ENCODE measurements at regions of chr16 and their contacts with region 1.

Region 1: DNA sequence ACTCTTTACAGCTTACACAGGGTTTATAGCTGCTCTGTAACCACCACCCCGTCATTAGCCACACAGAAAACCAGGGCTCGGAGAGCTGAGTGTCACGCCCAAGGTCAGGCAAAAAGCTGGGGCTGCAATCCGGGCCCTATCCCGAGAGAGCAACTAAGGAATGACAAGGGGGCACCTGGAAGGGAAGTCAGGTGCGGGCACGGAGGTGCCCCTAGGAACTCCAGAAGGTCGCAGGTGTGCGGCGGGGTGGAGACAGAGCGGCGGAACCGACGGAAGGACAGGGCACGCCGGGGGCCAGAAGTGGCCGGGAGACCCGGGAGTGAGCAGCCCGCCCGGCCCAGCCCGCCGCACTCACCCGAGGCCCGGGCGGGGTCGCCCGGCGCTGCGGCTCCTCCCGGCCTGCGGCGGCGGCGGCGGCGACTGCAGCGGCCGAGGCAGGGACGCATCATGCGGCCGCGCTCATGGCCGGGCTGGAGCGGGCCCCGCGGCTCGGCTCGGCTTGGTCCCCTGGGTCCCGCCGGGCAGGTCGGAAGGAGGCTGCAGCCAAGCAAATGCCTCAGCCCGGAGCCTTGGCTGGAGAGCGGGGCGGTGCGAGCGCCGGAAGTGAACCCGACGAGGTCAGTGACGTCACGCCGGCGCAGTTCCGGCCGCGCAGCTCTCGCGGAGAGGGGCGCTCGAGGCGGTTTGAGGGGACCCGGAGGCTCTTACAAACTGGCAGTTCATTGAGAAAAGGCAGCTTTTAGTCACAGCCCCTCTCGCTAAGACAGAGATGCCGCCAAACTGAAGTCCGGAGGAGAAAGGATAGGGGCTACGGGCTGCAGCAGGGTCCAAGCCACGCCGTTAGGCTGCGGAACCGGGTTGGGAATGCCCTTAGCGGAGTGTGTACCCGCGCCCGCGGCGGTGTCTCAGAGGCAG is at the start of gene ZDHHC7:
- DNase-seq: peak; percentile 75
- H3K4me3 Mint-ChIP-seq: peak within 1 kb of the TSS; percentile 84
- H3K27ac Mint-ChIP-seq: peak within 1 kb of the TSS; percentile 99
- H3K4me1 Mint-ChIP-seq: peaks cover 15% of the 10 kb centered on the region
- H3K27me3 Mint-ChIP-seq: no peaks in the 10 kb centered on the region
- CTCF ChIP-seq: no peak
- total RNA-seq, gene ZDHHC7: 46.3 and 54.5 TPM in 2 replicates

Region 2: DNA sequence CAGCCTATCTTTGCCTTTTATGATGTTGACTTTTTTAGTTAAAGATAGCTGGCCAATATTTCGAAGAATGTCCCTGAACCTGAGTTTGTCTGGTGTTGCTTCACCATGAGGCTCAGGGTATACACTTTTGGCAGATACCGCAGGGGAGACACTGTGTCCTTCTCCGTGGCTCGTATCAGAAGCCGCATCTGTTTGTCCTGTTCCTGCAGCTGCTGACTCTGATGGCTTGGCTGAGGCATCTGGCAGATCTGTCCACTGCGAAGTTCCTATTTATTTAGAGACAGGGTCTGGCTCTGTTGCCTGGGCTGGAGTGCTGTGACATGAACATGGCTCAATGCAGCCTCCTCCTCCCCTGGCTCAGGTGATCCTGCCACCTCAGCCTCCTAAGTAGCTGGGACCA is 97.9 kb before region 1 on chr16:
- CTCF ChIA-PET with region 1: no interaction called
- POLR2A ChIA-PET with region 1: no interaction called
- intact Hi-C with region 1: no loop called
- DNase-seq: no peak
- H3K4me3 Mint-ChIP-seq: no peak overlapping the region
- H3K27ac Mint-ChIP-seq: no peak overlapping the region
- H3K4me1 Mint-ChIP-seq: no peaks in the 10 kb centered on the region
- H3K27me3 Mint-ChIP-seq: peaks cover 59% of the 10 kb centered on the region
- CTCF ChIP-seq: no peak

Region 3: DNA sequence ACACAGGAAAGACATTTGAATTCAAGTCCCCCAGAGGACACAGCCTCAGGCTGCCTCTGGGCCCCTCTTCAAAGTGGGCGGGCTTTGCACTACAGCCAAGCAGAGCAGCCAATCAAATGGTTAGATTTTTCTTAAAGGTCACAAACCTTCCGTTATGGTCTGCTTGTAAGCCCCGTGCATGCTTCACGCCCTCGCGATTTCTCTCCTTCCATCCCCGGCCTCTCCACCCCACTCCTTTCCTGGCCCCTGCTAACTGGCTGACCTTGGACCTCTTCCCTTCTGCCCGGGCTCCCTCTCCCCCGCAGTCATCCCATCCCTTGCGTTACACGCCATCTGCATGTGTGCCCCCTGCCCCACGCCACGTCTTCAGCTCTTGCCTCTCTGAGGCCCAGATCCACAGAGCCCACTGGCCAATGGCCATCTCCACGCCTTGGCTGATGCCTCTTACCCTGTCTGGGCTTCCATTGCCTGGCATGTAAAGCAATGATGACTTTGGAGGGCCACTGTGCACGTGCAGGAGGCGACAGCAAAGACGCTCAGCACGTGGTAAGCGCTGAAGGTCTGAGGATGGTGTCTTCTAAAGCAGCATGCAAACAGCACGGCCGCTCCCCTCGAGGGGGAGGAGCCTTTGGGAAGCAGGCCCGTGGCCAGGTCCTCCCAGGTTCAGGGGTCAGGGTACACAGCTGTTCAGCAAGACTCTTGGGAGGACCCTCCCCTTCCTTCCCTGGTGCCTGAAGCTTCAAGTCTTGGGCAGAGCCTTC is 86.7 kb before region 1 on chr16:
- CTCF ChIA-PET with region 1: no interaction called
- POLR2A ChIA-PET with region 1: no interaction called
- intact Hi-C with region 1: no loop called
- DNase-seq: no peak
- H3K4me3 Mint-ChIP-seq: no peak overlapping the region
- H3K27ac Mint-ChIP-seq: no peak overlapping the region
- H3K4me1 Mint-ChIP-seq: peaks cover 3% of the 10 kb centered on the region
- H3K27me3 Mint-ChIP-seq: no peaks in the 10 kb centered on the region
- CTCF ChIP-seq: no peak

Region 4: GRCh38 chr16:85037050-85037410 is 25.8 kb after region 1 on chr16:
- CTCF ChIA-PET with region 1: no interaction called
- POLR2A ChIA-PET with region 1: interaction called, 12 read pairs
- intact Hi-C with region 1: no loop called
- DNase-seq: peak; percentile 96
- H3K4me3 Mint-ChIP-seq: peak overlapping the region; percentile 32
- H3K27ac Mint-ChIP-seq: peak overlapping the region; percentile 72
- H3K4me1 Mint-ChIP-seq: peaks cover 16% of the 10 kb centered on the region
- H3K27me3 Mint-ChIP-seq: no peaks in the 10 kb centered on the region
- CTCF ChIP-seq: no peak

Region 5: DNA sequence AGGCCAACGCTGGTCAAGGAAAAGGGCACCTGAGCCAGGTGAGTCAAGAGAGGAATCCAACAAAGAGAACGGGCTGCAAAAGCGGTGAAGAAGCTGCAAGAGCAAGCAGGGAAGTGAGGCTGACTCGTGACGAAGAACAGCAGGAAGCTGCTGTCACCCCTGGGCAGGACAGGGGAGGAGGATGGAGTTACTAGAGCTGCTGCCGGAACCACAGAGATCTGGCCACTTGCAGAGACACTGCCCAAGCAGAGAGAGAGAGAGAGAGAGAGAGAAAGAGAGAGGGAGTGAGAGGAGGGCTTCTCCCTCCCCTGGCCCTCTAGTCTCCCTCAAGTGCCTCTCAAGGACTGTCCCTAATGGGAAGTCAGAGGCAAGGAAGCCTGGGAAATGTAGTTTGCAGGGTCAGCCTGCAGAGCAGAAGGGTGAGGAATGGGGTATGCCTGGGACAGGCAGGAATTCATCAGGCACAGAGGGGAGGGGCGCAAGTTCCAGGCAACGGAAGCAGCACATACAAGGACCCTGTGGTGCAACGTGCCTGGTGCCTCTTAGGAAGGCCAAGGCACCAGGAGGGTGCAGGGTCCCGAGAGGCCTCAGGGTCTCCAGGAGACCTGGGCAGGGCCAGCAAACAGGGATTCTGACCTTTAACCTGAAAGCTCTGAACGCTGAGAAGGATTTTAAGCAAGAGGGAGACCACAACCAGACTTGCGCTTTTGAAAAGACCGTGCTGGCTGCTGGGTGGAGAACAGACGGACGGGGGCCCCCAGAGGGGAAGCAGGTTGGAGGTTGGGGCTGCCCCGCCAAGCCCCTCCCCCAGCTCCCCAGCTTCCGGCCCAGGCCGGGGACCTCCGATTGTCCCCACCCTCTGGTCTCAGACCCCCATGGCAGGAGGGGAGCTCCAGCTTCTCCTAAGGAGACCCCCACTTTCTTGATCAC is 146.9 kb after region 1 on chr16:
- CTCF ChIA-PET with region 1: no interaction called
- POLR2A ChIA-PET with region 1: no interaction called
- intact Hi-C with region 1: no loop called
- DNase-seq: no peak
- H3K4me3 Mint-ChIP-seq: no peak overlapping the region
- H3K27ac Mint-ChIP-seq: peak overlapping the region; percentile 24
- H3K4me1 Mint-ChIP-seq: peaks cover 5% of the 10 kb centered on the region
- H3K27me3 Mint-ChIP-seq: peaks cover 23% of the 10 kb centered on the region
- CTCF ChIP-seq: no peak